Motor neuron (in vitro differentiated cells): ENCODE measurements at regions of chr11 and their contacts with region 1.

Region 1: DNA sequence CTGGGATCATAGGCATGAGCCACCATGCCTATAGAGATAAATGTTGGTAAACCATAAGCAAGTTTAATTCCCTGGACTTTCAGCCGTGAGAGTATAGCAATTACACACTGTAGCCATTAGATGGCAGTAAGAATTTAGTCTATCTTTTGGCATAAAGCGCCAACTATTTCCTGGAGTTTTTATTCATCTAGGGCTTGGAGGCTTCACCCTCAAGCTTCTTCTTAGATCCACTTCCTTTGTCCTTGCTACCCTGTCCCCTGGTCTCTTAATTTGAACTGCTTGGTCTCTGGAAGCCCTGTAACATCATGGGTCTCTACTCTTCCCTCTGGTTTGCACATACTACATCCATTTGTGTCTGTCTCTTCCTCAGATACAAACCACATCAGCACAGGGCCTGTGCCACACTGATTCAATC is 38.2 kb downstream of the OR10A6 start:
- ATAC-seq: peak in 4 of 8 experiments; percentile 11 to 84 (median 43)
- H3K4me3 ChIP-seq: no peak overlapping the region
- H3K27ac ChIP-seq: no peak overlapping the region
- H3K4me1 ChIP-seq: no peaks in the 10 kb centered on the region

Region 2: GRCh38 chr11:7571640-7572000 is 321.2 kb before region 1 on chr11:
- in situ Hi-C with region 1: no loop called
- ATAC-seq: peak; percentile 57 to 93 (median 82)
- H3K4me3 ChIP-seq: no peak overlapping the region
- H3K27ac ChIP-seq: no peak overlapping the region
- H3K4me1 ChIP-seq: peaks cover 10 to 17% of the 10 kb centered on the region in 2 donors

Region 3: DNA sequence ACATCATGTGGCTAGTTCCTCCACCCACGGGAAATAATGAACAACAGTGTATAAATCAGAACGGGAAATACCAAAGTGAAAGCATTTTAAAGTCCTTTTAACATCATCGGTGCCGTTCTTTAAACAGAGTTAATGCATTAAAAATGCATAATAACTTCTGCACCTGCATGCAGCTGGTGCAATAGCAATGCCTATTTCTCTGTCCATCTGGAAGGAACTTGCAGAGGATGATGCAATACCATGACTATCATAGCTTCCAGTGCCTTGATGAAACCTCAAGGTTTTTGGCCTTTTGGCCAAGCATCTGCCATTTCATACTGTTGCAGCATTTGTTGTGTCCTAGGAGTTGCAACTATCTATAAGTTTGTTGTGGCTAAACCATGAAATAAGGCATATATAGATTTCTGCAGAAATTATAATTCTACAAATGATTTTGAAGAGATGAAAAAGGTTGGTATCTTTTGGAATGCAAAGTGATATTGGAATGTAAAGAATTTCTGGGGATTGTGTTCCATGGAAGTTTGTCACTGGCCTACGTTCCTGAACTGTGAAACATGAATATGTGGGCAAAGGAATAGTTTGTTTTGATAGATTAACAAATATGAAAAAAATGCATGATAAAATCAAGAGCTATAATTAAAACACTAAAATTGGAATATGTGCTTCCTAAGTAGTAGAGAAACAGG is 84.5 kb after region 1 on chr11:
- in situ Hi-C with region 1: loop called in 1 of 9 experiments (anchors 10 kb)
- ATAC-seq: peak in 3 of 8 experiments; percentile 42 to 69 (median 61)
- H3K4me3 ChIP-seq: no peak overlapping the region
- H3K27ac ChIP-seq: no peak overlapping the region
- H3K4me1 ChIP-seq: no peaks in the 10 kb centered on the region

Region 4: DNA sequence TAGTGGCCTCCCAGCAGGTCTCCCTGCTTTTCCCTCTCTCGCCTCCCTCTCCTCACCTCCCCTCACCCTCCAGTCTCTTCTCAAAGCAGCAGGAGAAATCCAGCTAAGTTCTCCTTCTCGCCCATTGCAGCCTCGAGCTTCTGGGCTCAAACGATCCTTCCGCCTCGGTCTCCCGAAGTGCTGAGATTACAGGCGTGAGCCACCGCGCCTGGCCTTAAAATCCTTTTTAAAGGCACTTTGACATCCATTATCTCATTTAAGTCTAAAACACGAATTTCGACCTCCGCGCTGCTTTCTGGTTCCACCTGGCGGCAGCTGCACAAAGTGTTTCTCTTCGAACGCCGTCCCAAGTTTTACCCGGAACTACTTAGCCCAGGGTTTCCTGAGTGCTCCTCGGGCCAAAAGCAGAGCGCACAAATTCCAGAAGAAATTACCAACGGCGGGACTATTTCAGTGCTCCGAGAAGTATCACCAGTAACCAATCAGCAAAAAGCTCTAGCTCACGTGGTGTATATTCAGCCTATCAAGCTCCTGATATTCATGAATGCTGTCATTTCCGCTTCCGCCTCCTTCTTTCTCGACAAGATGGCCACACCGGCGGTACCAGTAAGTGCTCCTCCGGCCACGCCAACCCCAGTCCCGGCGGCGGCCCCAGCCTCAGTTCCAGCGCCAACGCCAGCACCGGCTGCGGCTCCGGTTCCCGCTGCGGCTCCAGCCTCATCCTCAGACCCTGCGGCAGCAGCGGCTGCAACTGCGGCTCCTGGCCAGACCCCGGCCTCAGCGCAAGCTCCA is 94.1 kb after region 1 on chr11 and contains the start of gene EIF3F:
- in situ Hi-C with region 1: loop called in 1 of 9 experiments (anchors 5 kb)
- ATAC-seq: peak; percentile 97 to 99 (median 99)
- H3K4me3 ChIP-seq: peak within 1 kb of the TSS; percentile 72 to 99 (median 89)
- H3K27ac ChIP-seq: peak within 1 kb of the TSS; percentile 82 to 95
- H3K4me1 ChIP-seq: peaks cover 10 to 11% of the 10 kb centered on the region in 2 donors
- total RNA-seq, gene EIF3F: 212 to 457 (median 285) TPM

Region 5: GRCh38 chr11:8122173-8122764 is 229.4 kb after region 1 on chr11:
- in situ Hi-C with region 1: no loop called
- ATAC-seq: peak in 3 of 8 experiments; percentile 60 to 94 (median 92)
- H3K4me3 ChIP-seq: no peak overlapping the region
- H3K27ac ChIP-seq: no peak overlapping the region
- H3K4me1 ChIP-seq: peaks cover 6 to 7% of the 10 kb centered on the region in 2 donors